ENCODE measurements at regions of chr3 and their contacts with region 1.

Region 1: DNA sequence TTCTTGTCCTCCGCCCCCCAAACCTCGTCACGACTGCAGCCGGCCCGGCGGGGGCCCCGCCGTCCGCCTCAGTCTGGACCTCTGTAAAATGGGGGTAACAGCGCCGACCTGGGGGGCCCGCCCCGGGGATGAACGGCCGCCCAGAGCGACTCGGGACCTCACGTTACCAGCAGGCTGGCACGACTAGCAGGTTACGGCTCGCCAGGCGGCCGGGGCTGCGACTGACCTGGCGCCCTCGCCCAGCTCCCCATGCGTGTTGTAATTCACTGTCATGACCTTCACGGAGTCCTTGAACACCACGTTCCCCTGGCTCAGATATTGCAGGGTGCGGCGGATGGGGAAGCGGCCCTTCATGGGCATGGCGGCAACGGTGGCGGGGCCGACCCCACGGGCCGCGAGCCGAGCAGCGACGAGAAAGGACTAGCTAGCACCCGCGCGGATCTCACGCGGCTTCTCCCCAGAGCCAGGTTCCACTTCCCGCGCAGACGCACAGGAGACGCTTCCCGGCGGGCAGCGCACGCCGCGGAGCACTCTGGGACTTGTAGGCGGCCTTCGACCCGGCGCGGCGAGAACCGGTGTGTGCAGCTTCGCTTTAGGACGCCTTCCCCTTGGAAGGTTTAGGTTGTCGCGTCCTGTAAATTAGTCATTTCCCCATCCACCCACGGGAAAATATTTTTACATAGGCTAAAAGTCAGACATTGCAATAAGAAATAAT is at the start of gene MRPS25:
- DNase-seq: peak; percentile 83 to 93 (median 85)
- H3K4me3 ChIP-seq: peak within 1 kb of the TSS; percentile 65
- H3K4me3 Mint-ChIP-seq: peak within 1 kb of the TSS; percentile 93 to 99 (median 97)
- H3K27ac ChIP-seq: peak within 1 kb of the TSS; percentile 83
- H3K27ac Mint-ChIP-seq: peak within 1 kb of the TSS; percentile 85 to 98 (median 95)
- H3K4me1 ChIP-seq: peaks cover 16% of the 10 kb centered on the region
- H3K4me1 Mint-ChIP-seq: peaks cover 27 to 31% (median 31%) of the 10 kb centered on the region in 3 donors
- H3K27me3 ChIP-seq: no peaks in the 10 kb centered on the region
- H3K27me3 Mint-ChIP-seq: no peaks in the 10 kb centered on the region
- total RNA-seq, gene MRPS25: 82.7 to 84.7 TPM

Region 2: DNA sequence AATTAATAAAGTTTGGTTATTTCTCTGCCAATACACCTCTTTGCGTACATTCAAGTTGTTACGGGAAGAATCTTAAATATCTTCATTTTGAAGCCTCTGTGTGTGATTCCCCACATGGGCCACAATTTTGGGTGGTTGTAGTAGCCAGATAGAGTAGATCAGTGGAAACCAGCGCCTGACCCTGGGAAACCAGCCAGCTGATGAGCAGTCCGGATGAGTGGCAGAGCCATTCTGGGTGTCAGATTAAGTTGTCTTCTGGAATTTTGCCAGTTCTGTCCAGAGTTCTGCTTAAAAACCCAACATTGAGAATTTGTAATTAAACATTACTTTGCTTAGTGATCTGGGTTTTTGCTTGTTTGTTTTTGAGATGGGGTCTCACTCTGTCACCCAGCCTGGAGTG is 49.5 kb before region 1 on chr3:
- CTCF ChIA-PET with region 1: no interaction called
- POLR2A ChIA-PET with region 1: no interaction called
- DNase-seq: no peak
- H3K4me3 ChIP-seq: no peak overlapping the region
- H3K4me3 Mint-ChIP-seq: no peak overlapping the region
- H3K27ac ChIP-seq: no peak overlapping the region
- H3K27ac Mint-ChIP-seq: no peak overlapping the region
- H3K4me1 ChIP-seq: no peaks in the 10 kb centered on the region
- H3K4me1 Mint-ChIP-seq: peaks cover 0 to 4% (median 0%) of the 10 kb centered on the region in 3 donors
- H3K27me3 ChIP-seq: no peaks in the 10 kb centered on the region
- H3K27me3 Mint-ChIP-seq: no peaks in the 10 kb centered on the region

Region 3: GRCh38 chr3:15029625-15030024 is 35.4 kb before region 1 on chr3:
- CTCF ChIA-PET with region 1: no interaction called
- POLR2A ChIA-PET with region 1: no interaction called
- DNase-seq: no peak
- H3K4me3 ChIP-seq: no peak overlapping the region
- H3K4me3 Mint-ChIP-seq: no peak overlapping the region
- H3K27ac ChIP-seq: no peak overlapping the region
- H3K27ac Mint-ChIP-seq: peak overlapping the region in 2 of 8 donors; percentile 29 to 38
- H3K4me1 ChIP-seq: no peaks in the 10 kb centered on the region
- H3K4me1 Mint-ChIP-seq: no peaks in the 10 kb centered on the region
- H3K27me3 ChIP-seq: no peaks in the 10 kb centered on the region
- H3K27me3 Mint-ChIP-seq: no peaks in the 10 kb centered on the region

Region 4: GRCh38 chr3:15051531-15051930 is 13.5 kb before region 1 on chr3:
- CTCF ChIA-PET with region 1: interaction called, 11 read pairs
- POLR2A ChIA-PET with region 1: interaction called, 5 read pairs
- DNase-seq: peak in 3 of 5 donors; percentile 6 to 28 (median 13)
- H3K4me3 ChIP-seq: no peak overlapping the region
- H3K4me3 Mint-ChIP-seq: peak overlapping the region in 1 of 7 donors; percentile 44
- H3K27ac ChIP-seq: no peak overlapping the region
- H3K27ac Mint-ChIP-seq: peak overlapping the region in 3 of 8 donors; percentile 58 to 73 (median 68)
- H3K4me1 ChIP-seq: peaks cover 6% of the 10 kb centered on the region
- H3K4me1 Mint-ChIP-seq: peaks cover 24 to 44% (median 42%) of the 10 kb centered on the region in 3 donors
- H3K27me3 ChIP-seq: no peaks in the 10 kb centered on the region
- H3K27me3 Mint-ChIP-seq: peaks cover 0 to 5% of the 10 kb centered on the region in 2 donors

Region 5: GRCh38 chr3:15108082-15108545 is 43.1 kb after region 1 on chr3:
- CTCF ChIA-PET with region 1: no interaction called
- POLR2A ChIA-PET with region 1: no interaction called
- DNase-seq: peak; percentile 66 to 80 (median 69)
- H3K4me3 ChIP-seq: no peak overlapping the region
- H3K4me3 Mint-ChIP-seq: no peak overlapping the region
- H3K27ac ChIP-seq: no peak overlapping the region
- H3K27ac Mint-ChIP-seq: peak overlapping the region in 2 of 8 donors; percentile 23 to 31
- H3K4me1 ChIP-seq: no peaks in the 10 kb centered on the region
- H3K4me1 Mint-ChIP-seq: peaks cover 0 to 4% (median 3%) of the 10 kb centered on the region in 3 donors
- H3K27me3 ChIP-seq: no peaks in the 10 kb centered on the region
- H3K27me3 Mint-ChIP-seq: peaks cover 4 to 18% of the 10 kb centered on the region in 2 donors

Measured in CD8-positive, alpha-beta memory T cell (primary cell).